Heart left ventricle (tissue), 16 donors: ENCODE measurements at regions of chr10 and their contacts with region 1.

Region 1: DNA sequence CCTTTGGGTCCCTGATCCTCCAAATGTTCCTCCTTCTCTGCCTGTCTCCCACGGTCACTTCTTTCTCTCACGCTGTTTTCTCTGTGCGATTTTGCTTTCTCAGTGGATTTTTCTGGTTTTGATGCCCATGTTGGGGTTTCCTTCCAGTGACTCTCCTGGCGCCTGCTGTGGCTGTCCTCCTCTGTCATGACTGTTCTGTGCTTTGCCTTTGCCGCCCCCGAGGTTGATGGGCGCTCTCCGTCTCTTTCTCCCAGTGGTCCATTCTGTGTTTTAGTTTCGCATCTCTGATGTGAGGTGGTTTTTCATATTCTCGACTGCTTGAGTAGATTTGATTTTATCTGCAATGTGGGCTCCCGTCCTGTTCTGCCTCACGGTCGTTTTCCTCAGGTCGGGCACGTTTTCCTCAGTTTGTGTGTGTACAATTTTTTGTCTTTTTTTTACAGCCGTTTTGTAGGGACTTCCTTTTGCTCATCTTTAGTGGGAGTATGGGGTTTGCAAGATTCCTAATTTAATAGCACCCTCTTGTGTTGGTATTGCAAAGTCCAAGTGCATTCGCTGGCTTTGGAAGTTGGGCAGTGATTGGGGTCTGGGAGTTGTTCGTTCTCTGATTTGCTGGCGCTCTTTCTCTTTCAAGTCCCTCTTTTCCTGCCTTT is 100.0 kb downstream of the INPP5A start:
- DNase-seq: peak in 3 of 5 donors; percentile 13 to 23 (median 16)
- ATAC-seq: peak; percentile 53 to 71 (median 62)
- H3K4me3 ChIP-seq: no peak overlapping the region
- H3K27ac ChIP-seq: peak overlapping the region in 3 of 12 donors; percentile 5 to 95 (median 23)
- H3K4me1 ChIP-seq: peaks cover 7 to 57% (median 31%) of the 10 kb centered on the region in 12 donors
- H3K27me3 ChIP-seq: no peaks in the 10 kb centered on the region
- CTCF ChIP-seq: peak; percentile 59 to 85 (median 77)
- POLR2A ChIP-seq: no peak

Region 2: DNA sequence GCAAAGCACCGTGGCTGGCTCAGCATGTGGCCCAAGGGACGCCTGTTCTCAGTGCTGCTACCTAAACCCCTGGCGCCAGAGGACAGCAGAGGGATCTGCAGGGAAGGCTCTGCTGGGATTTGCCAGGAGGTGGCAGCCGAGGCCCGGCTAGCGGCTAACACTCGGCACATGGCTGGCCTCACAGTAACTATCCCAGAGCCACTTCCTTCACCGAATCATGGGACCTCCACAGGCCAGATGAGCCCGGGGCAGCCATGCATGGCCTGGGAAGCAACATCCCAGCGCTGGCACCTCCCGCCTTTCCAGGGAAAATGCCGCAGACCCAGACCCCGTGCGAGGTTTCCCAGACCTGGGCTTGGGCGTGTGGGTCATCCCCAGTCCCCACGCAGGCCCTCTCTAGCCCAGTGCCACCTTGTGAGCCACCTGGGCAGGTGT is 414.4 kb before region 1 on chr10:
- intact Hi-C with region 1: loop called in 4 of 10 experiments (anchors 5 to 10 kb)
- DNase-seq: peak; percentile 80 to 89 (median 83)
- ATAC-seq: peak; percentile 91 to 98 (median 94)
- H3K4me3 ChIP-seq: no peak overlapping the region
- H3K27ac ChIP-seq: no peak overlapping the region
- H3K4me1 ChIP-seq: peaks cover 0 to 34% (median 0%) of the 10 kb centered on the region in 12 donors
- H3K27me3 ChIP-seq: no peaks in the 10 kb centered on the region
- CTCF ChIP-seq: peak; percentile 86 to 96 (median 91)
- POLR2A ChIP-seq: no peak

Region 3: GRCh38 chr10:132329565-132330485 is 307.8 kb before region 1 on chr10:
- intact Hi-C with region 1: no loop called
- DNase-seq: no peak
- ATAC-seq: no peak
- H3K4me3 ChIP-seq: peak overlapping the region in 9 of 12 donors; percentile 22 to 91 (median 85)
- H3K27ac ChIP-seq: peak overlapping the region in 4 of 12 donors; percentile 22 to 88 (median 40)
- H3K4me1 ChIP-seq: peaks cover 4 to 43% (median 27%) of the 10 kb centered on the region in 12 donors
- H3K27me3 ChIP-seq: no peaks in the 10 kb centered on the region
- CTCF ChIP-seq: no peak
- POLR2A ChIP-seq: no peak

Region 4: DNA sequence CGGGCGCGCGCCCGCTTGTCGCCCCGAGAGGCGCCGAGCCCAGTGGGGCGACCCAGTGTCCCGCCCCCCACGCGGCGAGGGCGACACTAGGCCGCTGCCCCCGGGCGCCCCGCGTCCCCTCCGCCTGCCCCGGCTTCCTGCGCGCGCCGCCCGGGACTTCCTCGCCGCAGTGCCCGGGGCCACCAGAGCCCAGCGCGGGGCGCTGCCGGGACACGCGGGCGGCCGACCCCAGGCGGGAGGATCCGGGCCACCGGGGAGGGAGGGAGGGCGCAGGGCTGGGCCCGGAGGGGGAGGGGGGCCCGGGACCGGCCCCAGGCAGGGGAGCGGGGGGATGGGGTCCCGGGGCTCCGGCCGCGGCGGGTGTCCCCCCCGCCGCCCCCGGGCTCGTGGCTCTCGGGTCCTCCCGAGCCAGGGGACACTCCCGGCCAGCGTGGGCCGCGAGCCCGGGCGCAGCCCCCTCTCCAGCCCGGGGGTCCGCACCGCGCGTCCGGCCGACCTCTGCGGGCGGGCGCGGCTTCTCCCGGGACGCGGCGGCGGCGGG is 241.0 kb before region 1 on chr10:
- intact Hi-C with region 1: loop called in 6 of 10 experiments (anchors 5 to 10 kb)
- DNase-seq: peak; percentile 68 to 85 (median 75)
- ATAC-seq: peak in 3 of 4 donors; percentile 43 to 59 (median 53)
- H3K4me3 ChIP-seq: peak overlapping the region; percentile 21 to 98 (median 70)
- H3K27ac ChIP-seq: peak overlapping the region; percentile 86 to 99 (median 96)
- H3K4me1 ChIP-seq: peaks cover 0 to 63% (median 39%) of the 10 kb centered on the region in 12 donors
- H3K27me3 ChIP-seq: no peaks in the 10 kb centered on the region
- CTCF ChIP-seq: peak in 8 of 12 donors; percentile 7 to 54 (median 36)
- POLR2A ChIP-seq: no peak

Region 5: GRCh38 chr10:132506711-132507408 is 130.7 kb before region 1 on chr10:
- intact Hi-C with region 1: loop called in 6 of 10 experiments (anchors 2 to 10 kb)
- DNase-seq: peak in 2 of 5 donors; percentile 25 to 46
- ATAC-seq: peak; percentile 9 to 32 (median 16)
- H3K4me3 ChIP-seq: no peak overlapping the region
- H3K27ac ChIP-seq: peak overlapping the region in 10 of 12 donors; percentile 4 to 78 (median 50)
- H3K4me1 ChIP-seq: peaks cover 0 to 65% (median 27%) of the 10 kb centered on the region in 12 donors
- H3K27me3 ChIP-seq: no peaks in the 10 kb centered on the region
- CTCF ChIP-seq: no peak
- POLR2A ChIP-seq: no peak

Region 6: DNA sequence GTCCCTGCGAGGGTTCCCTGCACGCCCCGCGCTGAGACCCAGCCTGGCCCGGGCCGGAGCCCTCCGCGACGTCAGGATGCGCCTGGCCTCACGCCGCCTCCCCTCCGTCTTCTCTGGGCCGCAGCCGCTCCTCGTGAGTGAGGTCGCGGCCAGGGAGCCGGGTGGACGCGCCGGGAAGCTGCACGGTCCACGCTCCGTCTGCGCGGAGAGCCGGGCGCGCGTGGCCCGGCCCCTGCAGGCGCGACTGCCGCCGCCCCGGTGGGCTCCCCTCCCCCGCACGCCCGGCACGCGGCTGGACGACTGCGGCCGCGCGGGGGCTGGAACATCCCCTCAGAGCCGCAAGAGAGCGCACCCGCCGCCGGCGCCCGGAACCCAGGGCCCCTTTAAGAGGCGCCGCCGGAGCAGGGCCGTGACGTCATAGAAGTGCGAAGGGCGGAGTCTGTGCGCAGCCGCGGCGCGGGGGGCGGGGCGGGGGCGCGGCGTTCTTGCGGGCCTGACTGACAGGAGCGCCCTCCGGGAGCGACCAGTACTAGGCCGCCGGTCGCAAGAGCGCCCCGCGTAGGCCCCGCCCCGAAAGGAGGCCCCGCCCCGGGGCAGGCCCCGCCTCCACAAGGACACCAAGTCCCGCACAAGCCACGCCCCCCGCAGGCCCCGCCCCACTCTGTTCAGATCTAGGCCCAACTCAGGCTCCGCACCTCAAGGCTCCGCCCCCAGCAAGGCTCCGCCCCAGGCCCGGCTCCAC is 100.5 kb before region 1 on chr10:
- intact Hi-C with region 1: loop called in 4 of 10 experiments (anchors 2 to 5 kb)
- DNase-seq: peak; percentile 100
- ATAC-seq: peak; percentile 93 to 97 (median 96)
- H3K4me3 ChIP-seq: peak overlapping the region; percentile 56 to 87 (median 70)
- H3K27ac ChIP-seq: peak overlapping the region; percentile 57 to 96 (median 88)
- H3K4me1 ChIP-seq: peaks cover 0 to 58% (median 47%) of the 10 kb centered on the region in 12 donors
- H3K27me3 ChIP-seq: no peaks in the 10 kb centered on the region
- CTCF ChIP-seq: peak in 11 of 12 donors; percentile 20 to 61 (median 48)
- POLR2A ChIP-seq: peak in 1 of 2 donors; percentile 53

Region 7: DNA sequence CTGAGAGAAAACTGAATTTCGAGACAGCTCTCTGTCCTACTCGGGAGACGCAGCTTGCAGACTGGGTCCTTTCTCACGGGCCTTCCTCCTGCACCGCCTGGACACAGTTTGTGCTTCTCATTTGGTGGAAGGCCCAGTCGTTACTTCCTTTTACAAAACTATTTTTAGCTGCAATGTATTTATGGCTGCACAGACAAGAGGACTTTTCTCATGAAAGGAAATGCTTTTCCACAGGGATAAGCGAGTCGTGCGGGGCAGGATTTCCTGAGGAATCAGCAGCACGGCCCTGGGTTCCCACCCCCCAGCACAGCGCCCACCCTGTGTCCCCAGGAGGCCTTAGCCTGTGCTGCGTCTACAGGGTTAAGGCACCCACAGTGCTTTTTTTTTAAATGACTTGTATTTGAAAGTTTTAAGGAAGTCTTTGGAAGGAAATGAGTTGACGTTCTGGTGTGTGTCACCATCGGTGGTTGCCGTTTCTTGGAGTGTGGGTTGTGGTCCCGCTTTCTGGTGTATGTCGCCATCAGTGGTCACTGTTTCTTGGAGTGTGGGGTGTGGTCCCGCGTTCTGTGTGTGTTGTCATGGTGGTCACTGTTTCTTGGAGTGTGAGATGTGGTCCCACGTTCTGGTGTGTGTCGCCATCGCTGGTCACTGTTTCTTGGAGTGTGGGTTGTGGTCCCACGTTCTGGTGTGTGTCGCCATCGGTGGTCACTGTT is 49.1 kb before region 1 on chr10:
- intact Hi-C with region 1: loop called in 3 of 10 experiments (anchors 5 kb)
- DNase-seq: peak in 4 of 5 donors; percentile 64 to 82 (median 79)
- ATAC-seq: peak; percentile 52 to 79 (median 56)
- H3K4me3 ChIP-seq: peak overlapping the region in 9 of 12 donors; percentile 1 to 39 (median 24)
- H3K27ac ChIP-seq: peak overlapping the region; percentile 58 to 87 (median 78)
- H3K4me1 ChIP-seq: peaks cover 29 to 100% (median 89%) of the 10 kb centered on the region in 12 donors
- H3K27me3 ChIP-seq: no peaks in the 10 kb centered on the region
- CTCF ChIP-seq: no peak
- POLR2A ChIP-seq: no peak

Region 8: DNA sequence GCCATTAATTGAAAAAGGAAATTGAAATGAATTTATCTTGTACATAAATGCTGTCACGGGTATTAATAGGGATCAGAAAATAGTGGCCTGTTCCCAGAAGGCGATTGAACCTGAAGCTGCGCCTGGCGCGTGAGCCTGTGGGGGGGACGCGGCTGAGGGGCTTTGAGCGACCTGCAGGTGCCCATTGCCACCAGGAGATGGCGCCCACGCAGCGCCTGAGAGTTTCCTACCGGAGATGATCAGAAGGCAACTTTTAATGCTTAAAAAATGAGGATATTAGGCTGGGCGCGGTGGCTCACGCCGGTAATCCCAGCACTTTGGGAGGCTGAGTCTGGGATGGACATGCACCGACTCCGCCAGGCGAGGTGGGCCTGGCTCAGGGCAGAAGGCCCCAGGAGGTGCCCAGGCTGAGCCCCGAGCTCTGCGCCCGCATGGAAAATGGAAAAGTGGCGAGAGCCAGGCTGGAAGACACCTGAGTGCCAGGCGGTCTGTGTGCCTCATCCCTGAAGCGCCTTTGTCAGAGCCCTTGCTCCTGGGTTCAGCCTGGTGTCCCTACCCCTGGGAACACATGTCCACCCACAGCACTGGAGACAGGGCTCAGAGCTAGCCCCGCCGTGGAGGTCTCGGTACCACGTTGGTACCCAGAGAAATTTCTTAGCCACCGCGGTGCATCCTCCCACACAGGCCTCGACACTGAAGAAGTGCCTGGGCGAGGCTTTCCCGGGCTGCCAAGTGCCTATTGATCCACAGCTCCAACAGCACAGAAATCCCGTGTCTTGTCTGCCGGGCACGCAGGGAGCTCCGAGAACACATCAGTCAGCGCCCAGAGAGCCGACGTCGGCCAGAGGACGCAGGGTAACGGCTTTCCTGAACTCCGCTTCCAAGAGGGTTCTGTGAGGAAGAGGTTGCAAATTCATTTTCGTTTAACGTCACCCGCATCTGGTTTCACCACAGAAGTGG is 17.4 kb after region 1 on chr10:
- intact Hi-C with region 1: no loop called
- DNase-seq: peak in 2 of 5 donors; percentile 45 to 53
- ATAC-seq: no peak
- H3K4me3 ChIP-seq: no peak overlapping the region
- H3K27ac ChIP-seq: no peak overlapping the region
- H3K4me1 ChIP-seq: peaks cover 0 to 9% (median 0%) of the 10 kb centered on the region in 12 donors
- H3K27me3 ChIP-seq: no peaks in the 10 kb centered on the region
- CTCF ChIP-seq: peak; percentile 77 to 93 (median 89)
- POLR2A ChIP-seq: no peak

Region 9: GRCh38 chr10:132665946-132666704 is 28.5 kb after region 1 on chr10:
- intact Hi-C with region 1: no loop called
- DNase-seq: no peak
- ATAC-seq: peak in 3 of 4 donors; percentile 42 to 67 (median 55)
- H3K4me3 ChIP-seq: no peak overlapping the region
- H3K27ac ChIP-seq: peak overlapping the region in 1 of 12 donors; percentile 6
- H3K4me1 ChIP-seq: peaks cover 0 to 9% (median 0%) of the 10 kb centered on the region in 12 donors
- H3K27me3 ChIP-seq: no peaks in the 10 kb centered on the region
- CTCF ChIP-seq: no peak
- POLR2A ChIP-seq: no peak